Activated CD4-positive, alpha-beta T cell treated with anti-CD3 and anti-CD28 coated beads, Interleukin-2, amount 10 ng/mL, durations not matched to agents 7 days and 5 days (primary cell): ENCODE measurements at regions of chr17 and their contacts with region 1.

Region 1: GRCh38 chr17:75109407-75110233 is at the start of gene ARMC7:
- DNase-seq: peak; percentile 91
- H3K4me3 Mint-ChIP-seq: peak within 1 kb of the TSS; percentile 86
- H3K27ac Mint-ChIP-seq: peak within 1 kb of the TSS; percentile 91
- H3K4me1 Mint-ChIP-seq: peaks cover 41% of the 10 kb centered on the region
- H3K27me3 Mint-ChIP-seq: no peaks in the 10 kb centered on the region
- total RNA-seq, gene ARMC7: 18.5 to 18.8 TPM

Region 2: GRCh38 chr17:75087558-75088453 is 21.8 kb before region 1 on chr17 and contains the start of gene SLC16A5:
- CTCF ChIA-PET with region 1: interaction called, 11 read pairs
- POLR2A ChIA-PET with region 1: no interaction called
- DNase-seq: peak; percentile 62
- H3K4me3 Mint-ChIP-seq: peak within 1 kb of the TSS; percentile 78
- H3K27ac Mint-ChIP-seq: peak within 1 kb of the TSS; percentile 89
- H3K4me1 Mint-ChIP-seq: peaks cover 63% of the 10 kb centered on the region
- H3K27me3 Mint-ChIP-seq: no peaks in the 10 kb centered on the region
- total RNA-seq, gene SLC16A5: 11.4 to 12.2 TPM

Region 3: DNA sequence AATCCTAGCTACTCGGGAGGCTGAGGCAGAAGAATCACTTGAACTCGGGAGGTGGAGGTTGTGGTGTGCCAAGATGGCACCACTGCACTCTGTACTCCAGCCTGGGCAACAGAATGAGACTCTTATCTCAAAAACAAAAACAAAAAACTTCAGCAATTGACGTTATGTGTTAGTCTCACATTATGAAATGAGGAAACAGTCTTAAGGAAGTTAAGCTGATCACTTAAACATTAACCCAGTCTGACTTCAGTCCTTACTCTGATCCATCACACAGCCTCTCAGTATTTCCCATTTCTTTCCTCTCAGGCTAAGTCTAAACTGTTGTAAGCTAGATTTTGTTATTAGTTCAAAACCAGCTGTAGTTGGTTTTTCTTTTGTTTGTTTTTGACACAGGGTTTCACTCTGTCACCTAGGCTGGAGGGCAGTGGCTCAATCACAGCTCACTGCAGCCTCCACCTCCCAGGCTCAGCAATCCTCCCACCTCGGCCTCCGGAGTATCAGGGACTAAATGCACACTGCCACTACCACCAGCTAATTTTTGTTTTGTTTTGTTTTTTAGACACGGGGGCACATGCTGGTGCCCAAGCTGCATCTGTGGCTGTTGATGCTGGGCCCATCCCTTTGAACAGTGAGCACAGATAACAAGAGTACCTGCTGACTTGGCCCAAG is 38.4 kb after region 1 on chr17:
- CTCF ChIA-PET with region 1: interaction called, 12 read pairs
- POLR2A ChIA-PET with region 1: no interaction called
- DNase-seq: no peak
- H3K4me3 Mint-ChIP-seq: no peak overlapping the region
- H3K27ac Mint-ChIP-seq: no peak overlapping the region
- H3K4me1 Mint-ChIP-seq: peaks cover 35% of the 10 kb centered on the region
- H3K27me3 Mint-ChIP-seq: no peaks in the 10 kb centered on the region

Region 4: DNA sequence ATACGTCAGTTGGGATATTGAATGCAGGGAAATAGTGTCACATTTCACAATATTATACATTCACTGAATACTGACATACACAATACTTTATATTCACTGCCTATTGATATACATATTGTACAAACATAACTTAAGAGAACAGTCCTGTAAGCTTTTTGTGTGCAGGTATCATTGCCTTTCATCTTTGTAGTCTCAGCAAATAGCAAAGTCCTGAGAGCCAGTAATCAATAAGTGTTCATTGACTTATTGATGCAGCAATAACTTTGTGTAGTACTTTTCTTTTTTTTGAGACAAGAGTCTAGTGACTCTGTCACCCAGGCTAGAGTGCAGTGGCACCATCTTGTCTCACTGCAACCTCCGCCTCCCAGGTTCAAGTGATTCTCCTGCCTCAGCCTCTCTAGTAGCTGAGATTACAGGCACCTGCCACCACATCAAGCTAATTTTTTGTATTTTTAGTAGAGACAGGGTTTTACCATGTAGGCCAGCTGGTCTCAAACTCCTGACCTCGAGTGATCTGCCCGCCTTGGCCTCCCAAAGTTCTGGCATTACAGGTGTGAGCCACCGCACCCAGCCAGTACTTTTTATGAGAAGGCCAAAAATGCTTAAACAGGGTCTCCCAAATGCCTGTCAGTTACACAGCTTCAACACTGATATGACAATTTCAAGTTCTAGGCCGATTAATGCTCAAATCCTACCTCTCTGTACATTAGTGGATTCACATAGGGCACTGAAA is 90.4 kb after region 1 on chr17:
- CTCF ChIA-PET with region 1: interaction called, 46 read pairs
- POLR2A ChIA-PET with region 1: interaction called, 4 read pairs
- DNase-seq: no peak
- H3K4me3 Mint-ChIP-seq: no peak overlapping the region
- H3K27ac Mint-ChIP-seq: no peak overlapping the region
- H3K4me1 Mint-ChIP-seq: peaks cover 7% of the 10 kb centered on the region
- H3K27me3 Mint-ChIP-seq: no peaks in the 10 kb centered on the region

Region 5: GRCh38 chr17:75238684-75239191 is 129.1 kb after region 1 on chr17:
- CTCF ChIA-PET with region 1: interaction called, 14 read pairs
- POLR2A ChIA-PET with region 1: no interaction called
- DNase-seq: peak; percentile 65
- H3K4me3 Mint-ChIP-seq: no peak overlapping the region
- H3K27ac Mint-ChIP-seq: peak overlapping the region; percentile 84
- H3K4me1 Mint-ChIP-seq: peaks cover 25% of the 10 kb centered on the region
- H3K27me3 Mint-ChIP-seq: no peaks in the 10 kb centered on the region

Region 6: GRCh38 chr17:75352079-75352569 is 242.5 kb after region 1 on chr17:
- CTCF ChIA-PET with region 1: no interaction called
- POLR2A ChIA-PET with region 1: no interaction called
- DNase-seq: no peak
- H3K4me3 Mint-ChIP-seq: no peak overlapping the region
- H3K27ac Mint-ChIP-seq: no peak overlapping the region
- H3K4me1 Mint-ChIP-seq: peaks cover 60% of the 10 kb centered on the region
- H3K27me3 Mint-ChIP-seq: no peaks in the 10 kb centered on the region

Region 7: DNA sequence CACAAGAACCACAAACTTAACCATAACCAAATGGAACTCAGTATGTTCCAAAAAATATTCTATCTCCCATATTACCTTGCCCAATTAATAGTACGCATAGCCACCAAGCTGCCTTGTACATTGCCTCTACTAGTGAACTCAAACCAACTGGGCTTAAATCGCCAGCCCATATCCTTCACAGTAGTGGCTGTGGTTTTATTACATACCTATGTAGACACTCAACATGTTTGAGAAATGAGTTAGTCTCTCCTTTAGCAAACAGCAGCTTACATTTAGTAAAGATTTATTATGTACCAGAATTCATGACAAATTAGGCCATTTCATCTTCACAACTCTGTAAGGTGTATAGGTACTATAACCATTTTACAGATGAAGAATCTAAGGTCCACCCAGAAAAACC is 254.5 kb after region 1 on chr17:
- CTCF ChIA-PET with region 1: no interaction called
- POLR2A ChIA-PET with region 1: no interaction called
- DNase-seq: no peak
- H3K4me3 Mint-ChIP-seq: no peak overlapping the region
- H3K27ac Mint-ChIP-seq: no peak overlapping the region
- H3K4me1 Mint-ChIP-seq: peaks cover 87% of the 10 kb centered on the region
- H3K27me3 Mint-ChIP-seq: no peaks in the 10 kb centered on the region